OCI-LY7 (cell line): ENCODE measurements at regions of chr20 and their contacts with region 1.

Region 1: DNA sequence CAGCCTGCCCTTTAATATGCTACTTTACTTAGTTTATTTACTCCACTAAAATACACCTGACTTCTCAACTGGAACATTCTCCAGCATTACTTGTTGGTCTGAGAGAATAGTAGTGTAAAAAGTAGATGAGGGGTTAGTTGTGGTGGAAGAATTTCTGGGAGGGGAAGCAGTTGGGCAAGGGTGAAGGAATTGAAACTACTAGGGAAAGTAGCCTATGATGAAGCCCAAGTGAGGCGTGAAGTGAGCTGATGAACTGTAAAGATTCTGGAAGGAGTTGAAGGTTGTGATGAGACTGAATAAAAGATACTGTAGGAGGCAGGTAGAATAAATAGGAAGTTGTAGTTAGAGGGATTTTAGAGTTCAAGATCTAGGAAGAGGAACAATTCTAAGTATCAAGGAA is 72.5 kb downstream of the ITCH start:
- DNase-seq: peak; percentile 33
- H3K4me3 ChIP-seq: no peak overlapping the region
- H3K27ac ChIP-seq: no peak overlapping the region
- H3K4me1 ChIP-seq: peaks cover 19% of the 10 kb centered on the region
- CTCF ChIP-seq: no peak

Region 2: DNA sequence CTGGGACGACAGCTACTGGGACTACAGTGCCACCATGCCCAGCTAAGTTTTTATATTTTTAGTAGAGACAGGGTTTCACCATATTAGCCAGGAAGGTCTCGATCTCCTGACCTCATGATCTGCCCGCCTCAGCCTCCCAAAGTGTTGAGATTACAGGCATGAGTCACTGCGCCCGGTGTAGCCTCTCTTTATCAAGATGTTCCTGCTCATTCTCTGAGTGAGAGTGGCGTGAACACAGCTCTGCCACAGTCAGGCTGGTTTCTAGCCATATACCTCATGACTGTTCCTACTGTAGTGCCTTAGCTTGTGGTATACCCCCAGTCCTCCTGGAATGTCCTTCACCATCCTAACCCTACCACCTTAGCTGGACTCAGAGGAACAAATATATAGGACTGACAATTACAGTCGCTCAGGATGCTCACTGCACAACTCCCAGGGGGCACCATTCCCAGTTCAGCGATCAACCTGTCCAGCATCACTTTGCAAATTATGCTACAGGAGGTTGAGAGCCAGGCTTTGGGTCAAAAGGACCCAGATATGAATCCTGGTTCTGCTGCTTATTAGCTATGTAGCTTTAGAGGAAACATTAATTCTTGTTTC is 538.2 kb before region 1 on chr20:
- CTCF ChIA-PET with region 1: no interaction called
- POLR2A ChIA-PET with region 1: no interaction called
- intact Hi-C with region 1: no loop called
- DNase-seq: no peak
- H3K4me3 ChIP-seq: no peak overlapping the region
- H3K27ac ChIP-seq: no peak overlapping the region
- H3K4me1 ChIP-seq: peaks cover 52% of the 10 kb centered on the region
- CTCF ChIP-seq: peak; percentile 85

Region 3: GRCh38 chr20:34407962-34408474 is 27.6 kb before region 1 on chr20:
- CTCF ChIA-PET with region 1: no interaction called
- POLR2A ChIA-PET with region 1: no interaction called
- intact Hi-C with region 1: loop called (anchors 1 kb)
- DNase-seq: no peak
- H3K4me3 ChIP-seq: no peak overlapping the region
- H3K27ac ChIP-seq: no peak overlapping the region
- H3K4me1 ChIP-seq: peaks cover 33% of the 10 kb centered on the region
- CTCF ChIP-seq: no peak